Heart right ventricle (tissue), 16 donors: ENCODE measurements at regions of chr4 and their contacts with region 1.

Region 1: GRCh38 chr4:99679204-99679603 is 21.6 kb upstream of the C4orf54 start:
- DNase-seq: peak; percentile 34 to 68
- ATAC-seq: peak; percentile 90 to 97 (median 96)
- H3K4me3 ChIP-seq: no peak overlapping the region
- H3K27ac ChIP-seq: peak overlapping the region in 9 of 10 donors; percentile 5 to 73 (median 45)
- H3K4me1 ChIP-seq: peaks cover 0 to 24% (median 5%) of the 10 kb centered on the region in 9 donors
- H3K27me3 ChIP-seq: no peaks in the 10 kb centered on the region
- CTCF ChIP-seq: peak in 5 of 9 donors; percentile 8 to 27 (median 18)

Region 2: DNA sequence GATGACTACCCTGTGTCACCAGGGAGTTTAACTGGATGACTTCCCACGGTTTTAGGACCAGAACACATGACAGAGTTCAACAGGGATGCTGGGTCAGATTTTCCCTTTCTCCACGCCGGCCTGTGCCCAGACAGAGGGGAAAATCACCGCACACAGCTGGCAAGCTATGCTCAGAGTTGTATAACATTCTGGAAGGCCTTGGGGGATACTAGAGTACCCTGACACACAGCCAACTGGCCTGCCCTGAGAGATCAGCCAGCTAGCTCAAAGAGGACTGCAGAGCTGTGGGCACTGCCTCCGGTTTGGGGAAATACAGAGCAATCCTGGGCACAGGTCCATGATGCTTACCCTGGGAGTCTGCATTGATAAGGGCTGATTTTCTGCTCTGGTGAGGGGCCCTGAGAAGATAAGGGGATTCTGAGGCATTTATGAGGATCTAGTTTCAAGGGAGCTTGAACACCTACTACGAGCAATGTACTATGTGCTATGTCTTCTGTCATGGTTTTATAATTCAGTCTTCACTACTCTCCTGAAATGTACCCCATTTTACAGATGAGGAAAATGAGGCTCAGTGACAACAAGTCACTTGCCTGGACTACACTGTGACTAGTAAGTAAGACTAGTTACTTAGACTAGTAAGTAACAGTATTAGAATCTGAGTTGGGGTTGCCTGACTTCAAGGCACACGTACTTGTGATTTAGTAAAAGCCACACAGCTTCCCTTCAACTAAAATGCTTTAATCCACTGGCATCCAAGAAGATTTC is 36.3 kb before region 1 on chr4:
- intact Hi-C with region 1: no loop called
- DNase-seq: peak; percentile 68 to 79
- ATAC-seq: peak; percentile 91 to 99 (median 96)
- H3K4me3 ChIP-seq: no peak overlapping the region
- H3K27ac ChIP-seq: peak overlapping the region in 7 of 10 donors; percentile 7 to 72 (median 56)
- H3K4me1 ChIP-seq: peaks cover 0 to 29% (median 13%) of the 10 kb centered on the region in 9 donors
- H3K27me3 ChIP-seq: no peaks in the 10 kb centered on the region
- CTCF ChIP-seq: no peak

Region 3: GRCh38 chr4:99715286-99715685 is 36.1 kb after region 1 on chr4:
- intact Hi-C with region 1: loop called in 2 of 10 experiments (anchors 5 kb)
- DNase-seq: no peak
- ATAC-seq: peak in 4 of 8 donors; percentile 37 to 67 (median 51)
- H3K4me3 ChIP-seq: no peak overlapping the region
- H3K27ac ChIP-seq: peak overlapping the region in 3 of 10 donors; percentile 2 to 55 (median 33)
- H3K4me1 ChIP-seq: peaks cover 0 to 15% (median 10%) of the 10 kb centered on the region in 9 donors
- H3K27me3 ChIP-seq: no peaks in the 10 kb centered on the region
- CTCF ChIP-seq: no peak

Region 4: GRCh38 chr4:99723612-99724011 is 44.4 kb after region 1 on chr4:
- intact Hi-C with region 1: loop called in 2 of 10 experiments (anchors 5 kb)
- DNase-seq: peak; percentile 55 to 58
- ATAC-seq: peak; percentile 81 to 98 (median 95)
- H3K4me3 ChIP-seq: no peak overlapping the region
- H3K27ac ChIP-seq: peak overlapping the region; percentile 5 to 83 (median 63)
- H3K4me1 ChIP-seq: peaks cover 0 to 35% (median 11%) of the 10 kb centered on the region in 9 donors
- H3K27me3 ChIP-seq: no peaks in the 10 kb centered on the region
- CTCF ChIP-seq: no peak